ENCODE measurements at regions of chr7 and their contacts with region 1.

Region 1: DNA sequence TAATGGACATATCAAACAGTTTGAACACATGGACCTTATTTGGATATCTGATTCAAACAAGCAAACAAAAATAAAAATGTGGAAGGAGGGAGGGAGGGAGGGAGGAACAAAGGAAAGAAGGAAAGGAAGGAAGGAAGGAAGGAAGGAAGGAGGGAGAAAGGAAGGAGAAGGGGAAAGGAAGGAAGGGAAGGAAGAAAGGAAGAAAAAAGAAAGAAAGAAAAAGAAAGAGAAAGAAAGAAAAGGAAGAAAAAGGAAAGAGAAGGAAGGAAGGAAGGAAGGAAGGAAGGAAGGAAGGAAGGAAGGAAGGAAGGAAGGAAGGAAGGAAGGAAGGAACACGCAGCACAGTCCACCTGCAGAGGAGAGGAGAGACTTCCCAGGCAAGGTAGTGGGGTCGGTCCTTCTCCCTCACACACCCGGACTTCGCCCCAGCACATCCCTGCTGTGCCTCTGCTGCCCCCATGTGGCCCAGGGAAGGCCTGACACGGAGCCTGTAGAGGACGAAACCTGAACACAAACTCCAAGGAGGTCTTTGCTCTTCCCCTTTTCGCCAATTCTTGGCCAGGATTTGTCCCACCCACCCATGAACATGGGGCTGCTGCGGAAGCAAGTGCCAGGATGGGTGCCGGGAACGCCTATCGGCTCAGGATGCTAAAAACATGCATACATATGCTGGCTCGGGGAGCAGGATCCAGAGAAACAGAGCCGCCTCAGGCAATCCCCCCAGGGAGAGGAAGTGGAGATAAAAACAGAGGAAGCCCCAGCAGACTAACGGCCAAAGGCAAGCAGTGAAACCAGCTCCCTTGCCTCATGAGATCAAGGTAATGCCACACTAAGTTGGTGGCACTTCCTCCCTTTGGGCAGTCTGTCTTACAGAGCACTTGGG is 52.3 kb upstream of the DGKI start:
- DNase-seq: peak; percentile 89
- ATAC-seq: peak; percentile 69
- H3K4me3 Mint-ChIP-seq: no peak overlapping the region
- H3K27ac Mint-ChIP-seq: peak overlapping the region; percentile 48
- H3K4me1 Mint-ChIP-seq: peaks cover 41% of the 10 kb centered on the region
- H3K27me3 Mint-ChIP-seq: no peaks in the 10 kb centered on the region

Region 2: DNA sequence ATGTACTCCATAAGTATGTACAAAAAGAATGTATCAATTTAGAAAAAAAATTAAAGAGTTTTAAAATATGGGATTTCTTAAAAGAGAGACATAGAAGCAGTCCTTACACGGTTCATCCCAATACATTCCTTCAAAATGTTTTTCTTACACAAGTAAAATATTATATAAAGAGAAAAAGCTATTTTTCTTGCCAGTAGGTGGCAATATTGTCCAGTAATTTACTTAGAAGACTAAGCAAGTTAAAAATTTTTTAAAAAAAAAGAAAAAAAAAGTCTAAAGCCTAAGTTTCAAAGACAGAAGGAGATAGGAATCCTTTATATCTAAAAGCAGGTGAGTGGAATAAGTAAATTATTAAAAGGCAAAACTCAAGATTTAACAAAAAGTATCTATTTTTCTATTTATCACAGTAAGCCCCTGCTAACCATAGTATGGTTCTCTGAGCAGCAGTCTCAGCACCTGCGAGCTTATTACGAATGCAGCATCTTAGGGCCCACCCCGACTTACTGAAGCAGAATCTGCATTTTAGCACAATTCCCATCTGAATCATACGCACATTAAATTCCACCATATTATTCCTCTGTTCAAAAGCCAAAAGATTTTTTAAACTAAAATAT is 292.9 kb before region 1 on chr7:
- CTCF ChIA-PET with region 1: no interaction called
- POLR2A ChIA-PET with region 1: no interaction called
- intact Hi-C with region 1: loop called (anchors 1 kb)
- DNase-seq: no peak
- ATAC-seq: no peak
- H3K4me3 Mint-ChIP-seq: no peak overlapping the region
- H3K27ac Mint-ChIP-seq: no peak overlapping the region
- H3K4me1 Mint-ChIP-seq: no peaks in the 10 kb centered on the region
- H3K27me3 Mint-ChIP-seq: peaks cover 11% of the 10 kb centered on the region

Region 3: GRCh38 chr7:137816696-137817320 is 82.3 kb before region 1 on chr7:
- CTCF ChIA-PET with region 1: interaction called, 3 read pairs
- POLR2A ChIA-PET with region 1: no interaction called
- intact Hi-C with region 1: loop called in 1 of 2 experiments (anchors 1 kb)
- DNase-seq: no peak
- ATAC-seq: no peak
- H3K4me3 Mint-ChIP-seq: no peak overlapping the region
- H3K27ac Mint-ChIP-seq: no peak overlapping the region
- H3K4me1 Mint-ChIP-seq: no peaks in the 10 kb centered on the region
- H3K27me3 Mint-ChIP-seq: peaks cover 24% of the 10 kb centered on the region

Region 4: DNA sequence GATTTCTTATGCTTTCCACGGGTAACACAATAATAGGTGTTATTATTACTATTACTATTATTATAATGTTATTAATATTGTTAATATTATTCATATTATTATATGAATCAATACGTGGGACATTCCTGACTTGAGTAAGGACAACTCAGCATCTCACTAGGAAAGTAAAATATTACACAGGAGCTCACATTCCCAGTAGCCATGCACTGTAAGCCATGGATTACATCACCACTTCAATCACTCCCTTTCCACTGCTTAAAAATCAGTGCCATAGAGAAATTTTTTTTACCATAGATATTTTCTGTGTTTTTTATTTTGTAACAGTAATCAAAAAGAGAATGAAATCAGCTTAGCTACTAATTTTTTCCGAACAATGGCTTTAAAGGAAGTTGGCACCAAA is 16.2 kb after region 1 on chr7:
- CTCF ChIA-PET with region 1: interaction called, 19 read pairs
- POLR2A ChIA-PET with region 1: no interaction called
- intact Hi-C with region 1: no loop called
- DNase-seq: no peak
- ATAC-seq: no peak
- H3K4me3 Mint-ChIP-seq: no peak overlapping the region
- H3K27ac Mint-ChIP-seq: no peak overlapping the region
- H3K4me1 Mint-ChIP-seq: no peaks in the 10 kb centered on the region
- H3K27me3 Mint-ChIP-seq: no peaks in the 10 kb centered on the region

Region 5: DNA sequence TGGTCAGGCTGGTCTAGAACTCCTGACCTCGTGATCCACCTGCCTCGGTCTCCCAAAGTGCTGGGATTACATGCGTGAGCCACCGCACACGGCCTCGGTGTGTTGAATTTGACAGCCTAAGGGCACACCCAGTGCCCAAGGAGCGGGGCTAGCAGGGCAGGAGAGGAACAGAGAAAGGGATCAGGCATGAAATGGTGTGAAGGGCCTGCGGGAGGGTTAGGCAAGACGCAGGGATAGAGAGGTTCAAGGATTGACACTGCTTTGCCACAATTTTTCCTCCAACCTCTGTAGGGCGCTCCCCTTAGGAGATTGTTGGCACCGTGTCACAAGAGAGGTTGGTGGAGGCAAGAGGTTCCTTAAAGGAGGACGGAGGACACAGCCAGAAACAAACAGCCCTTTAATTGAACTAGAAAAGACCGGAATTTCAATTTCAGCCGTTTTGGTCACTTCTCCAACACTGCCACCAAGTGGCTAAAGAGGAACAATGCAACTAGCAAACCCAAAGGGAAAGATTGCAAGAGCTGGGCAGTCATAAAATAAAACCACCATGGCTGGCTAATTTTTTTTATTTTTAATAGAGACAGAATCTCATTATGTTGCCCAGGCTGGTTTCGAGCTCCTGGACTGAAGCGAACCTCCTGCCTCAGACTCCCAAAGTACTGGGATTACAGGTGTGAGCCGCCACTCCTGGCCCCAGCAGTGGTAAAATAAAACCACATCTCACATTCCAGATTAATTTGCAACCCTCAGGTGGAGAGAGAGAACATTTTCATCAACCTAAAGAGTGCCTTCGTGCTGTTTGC is 109.7 kb after region 1 on chr7:
- CTCF ChIA-PET with region 1: interaction called, 247 read pairs
- POLR2A ChIA-PET with region 1: no interaction called
- intact Hi-C with region 1: loop called (anchors 1 kb)
- DNase-seq: peak; percentile 29
- ATAC-seq: peak; percentile 53
- H3K4me3 Mint-ChIP-seq: no peak overlapping the region
- H3K27ac Mint-ChIP-seq: no peak overlapping the region
- H3K4me1 Mint-ChIP-seq: peaks cover 3% of the 10 kb centered on the region
- H3K27me3 Mint-ChIP-seq: peaks cover 2% of the 10 kb centered on the region